GM10248 (cell line): ENCODE measurements at regions of chr18 and their contacts with region 1.

Region 1: GRCh38 chr18:10851824-10852319 is 297.5 kb downstream of the PIEZO2 start:
- DNase-seq: peak; percentile 52
- CTCF ChIP-seq: peak; percentile 58

Region 2: GRCh38 chr18:10841203-10841602 is 10.7 kb before region 1 on chr18:
- CTCF ChIA-PET with region 1: interaction called, 23 read pairs
- POLR2A ChIA-PET with region 1: no interaction called
- DNase-seq: no peak
- CTCF ChIP-seq: no peak

Region 3: DNA sequence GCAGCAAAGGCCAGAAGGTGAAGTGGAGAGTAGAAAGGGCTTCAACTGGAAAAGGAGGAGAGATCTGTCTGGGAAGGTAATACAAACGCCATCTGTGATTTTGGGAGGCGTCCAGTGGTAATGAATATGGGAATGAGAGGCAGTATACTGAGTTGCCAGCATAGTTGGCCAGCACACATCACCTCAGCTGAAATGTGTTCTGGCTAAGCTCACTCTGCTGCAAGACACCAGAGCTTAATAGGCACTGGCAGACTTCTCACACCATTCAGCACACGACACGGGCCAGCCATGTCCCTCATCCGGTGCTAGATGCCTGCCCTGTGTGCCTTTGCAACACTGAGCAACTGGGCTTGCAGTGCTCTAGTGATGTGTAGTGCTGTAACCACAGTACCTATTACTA is 20.4 kb after region 1 on chr18:
- CTCF ChIA-PET with region 1: interaction called, 11 read pairs
- POLR2A ChIA-PET with region 1: no interaction called
- DNase-seq: no peak
- CTCF ChIP-seq: no peak

Region 4: DNA sequence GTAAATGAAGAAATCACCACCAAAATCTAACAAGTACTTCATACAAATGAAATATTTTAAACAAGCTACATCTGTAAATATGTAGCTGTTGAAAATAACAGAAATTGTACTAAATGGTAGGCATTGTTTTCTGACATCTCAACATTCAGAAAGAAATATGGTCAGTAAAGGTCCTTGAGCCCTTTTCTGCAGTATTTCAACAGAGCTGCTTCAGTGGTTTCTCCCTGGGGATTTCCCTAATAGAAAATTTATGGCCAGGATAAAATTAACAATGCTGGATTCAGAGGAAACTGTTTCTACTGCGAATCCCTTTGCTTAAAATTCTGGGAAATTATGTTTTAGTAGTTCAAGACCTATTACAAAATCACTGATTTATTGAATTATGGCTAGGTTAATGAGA is 40.9 kb after region 1 on chr18:
- CTCF ChIA-PET with region 1: interaction called, 14 read pairs
- POLR2A ChIA-PET with region 1: no interaction called
- DNase-seq: no peak
- CTCF ChIP-seq: no peak

Region 5: DNA sequence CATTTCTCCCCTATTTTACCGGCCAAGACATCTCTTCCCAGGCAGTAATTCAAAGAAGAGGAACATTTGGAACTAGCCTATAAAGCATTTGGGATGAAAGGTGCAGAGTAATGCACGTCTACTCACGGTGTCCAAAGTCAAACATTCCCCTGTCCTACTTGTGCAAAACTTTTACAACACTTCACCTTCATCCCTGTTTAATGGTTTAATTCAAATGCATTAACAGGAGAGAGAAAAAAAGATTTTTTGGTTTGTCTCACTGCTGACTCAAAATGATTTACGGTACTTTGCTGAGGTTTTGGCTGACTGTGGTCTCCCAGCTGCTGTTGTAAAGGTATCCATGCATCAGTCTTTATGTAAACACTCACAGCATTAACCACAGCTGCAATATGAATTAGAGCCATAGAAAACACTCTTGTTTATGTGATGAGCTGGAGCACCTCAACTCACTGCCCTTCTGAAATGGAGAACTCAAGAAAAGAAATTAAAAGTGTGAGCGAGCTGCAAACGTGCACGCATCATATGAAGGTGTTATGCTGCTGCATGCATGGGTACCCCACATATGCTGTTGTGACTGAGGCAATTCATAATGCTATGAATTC is 77.0 kb after region 1 on chr18:
- CTCF ChIA-PET with region 1: interaction called, 18 read pairs
- POLR2A ChIA-PET with region 1: no interaction called
- DNase-seq: peak; percentile 66
- CTCF ChIP-seq: no peak

Region 6: DNA sequence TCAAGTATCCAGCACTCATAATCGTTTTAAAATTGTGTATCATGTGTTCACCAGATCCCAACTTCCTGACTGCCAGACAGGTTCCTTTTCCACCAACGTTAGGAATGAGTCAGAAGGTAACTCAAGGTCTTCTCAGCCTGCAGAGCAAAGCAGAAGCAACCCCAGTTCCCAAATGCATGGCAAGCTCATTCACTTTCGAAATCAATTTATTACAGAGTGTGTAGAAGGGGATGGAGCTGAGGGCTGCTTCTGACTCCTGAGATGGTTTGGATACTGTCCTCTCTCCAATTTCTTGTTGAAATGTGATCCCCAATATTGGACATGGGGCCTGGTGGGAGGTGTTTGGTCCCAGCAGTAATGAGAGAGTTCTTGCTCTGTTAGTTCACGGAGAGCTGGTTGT is 183.0 kb after region 1 on chr18:
- CTCF ChIA-PET with region 1: interaction called, 97 read pairs
- POLR2A ChIA-PET with region 1: interaction called, 4 read pairs
- DNase-seq: no peak
- CTCF ChIP-seq: no peak

Region 7: DNA sequence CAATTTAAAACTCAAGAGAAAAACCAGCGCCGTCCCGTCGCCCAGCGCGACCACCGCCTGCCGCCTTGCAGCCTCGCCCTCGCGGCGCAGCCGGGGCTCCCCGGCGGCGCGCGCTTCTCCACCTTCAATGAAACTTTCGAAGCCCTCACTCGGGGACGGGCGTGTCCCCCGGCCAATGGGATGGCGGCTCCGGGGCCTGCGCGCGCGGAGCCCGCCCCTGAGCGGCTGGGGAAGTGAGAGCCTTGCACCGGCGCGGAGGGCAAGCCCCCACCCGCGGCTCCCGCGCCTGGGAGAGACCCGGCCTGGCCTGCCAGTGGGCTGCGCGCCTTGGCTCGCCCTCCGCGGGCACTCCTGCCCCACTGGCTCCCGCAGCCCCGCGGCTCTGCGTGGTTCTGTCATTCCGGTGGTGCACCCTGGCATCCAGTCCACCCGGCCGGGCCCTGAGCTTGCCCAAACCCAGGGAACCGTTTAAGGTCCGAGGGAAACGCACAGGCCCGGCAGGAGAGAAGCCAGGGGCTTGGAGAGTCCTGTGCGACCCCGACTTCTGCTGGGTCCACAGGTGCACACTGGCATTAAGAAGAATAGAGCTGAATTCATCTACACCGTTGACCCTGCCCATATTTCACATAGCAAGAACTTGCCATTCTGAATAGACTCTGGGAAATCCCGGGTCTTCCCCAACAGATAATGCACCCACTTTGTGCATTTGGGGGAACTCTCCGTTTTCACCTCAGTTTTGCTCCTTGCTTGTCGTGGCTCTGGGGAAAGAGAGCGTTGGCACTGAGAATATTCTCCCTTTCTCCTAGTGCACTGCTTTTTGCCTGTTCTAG is 297.8 kb after region 1 on chr18 and contains the start of gene PIEZO2:
- CTCF ChIA-PET with region 1: interaction called, 42 read pairs
- POLR2A ChIA-PET with region 1: no interaction called
- DNase-seq: peak; percentile 92
- CTCF ChIP-seq: no peak